PC-3 (cell line): ENCODE measurements at regions of chr1 and their contacts with region 1.

Region 1: GRCh38 chr1:111448918-111449702 is at the starts of genes ATP5PB and WDR77:
- DNase-seq: peak; percentile 99
- ATAC-seq: peak; percentile 94
- H3K4me3 ChIP-seq: peak within 1 kb of the TSS; percentile 91
- H3K27ac ChIP-seq: peak within 1 kb of the TSS; percentile 65
- H3K4me1 ChIP-seq: peaks cover 32% of the 10 kb centered on the region
- H3K27me3 ChIP-seq: no peaks in the 10 kb centered on the region
- CTCF ChIP-seq: no peak
- total RNA-seq, gene ATP5PB: 448 and 612 TPM in 2 replicates
- total RNA-seq, gene WDR77: 62.1 and 67.9 TPM in 2 replicates

Region 2: GRCh38 chr1:111406321-111406768 is 42.8 kb before region 1 on chr1:
- CTCF ChIA-PET with region 1: no interaction called
- POLR2A ChIA-PET with region 1: no interaction called
- intact Hi-C with region 1: loop called (anchors 5 kb)
- DNase-seq: peak; percentile 59
- ATAC-seq: peak; percentile 95
- H3K4me3 ChIP-seq: no peak overlapping the region
- H3K27ac ChIP-seq: no peak overlapping the region
- H3K4me1 ChIP-seq: peaks cover 3% of the 10 kb centered on the region; the same call in 1 of the 2 replicates
- H3K27me3 ChIP-seq: peaks cover 13% of the 10 kb centered on the region
- CTCF ChIP-seq: no peak